ENCODE measurements at regions of chr7 and their contacts with region 1.

Region 1: DNA sequence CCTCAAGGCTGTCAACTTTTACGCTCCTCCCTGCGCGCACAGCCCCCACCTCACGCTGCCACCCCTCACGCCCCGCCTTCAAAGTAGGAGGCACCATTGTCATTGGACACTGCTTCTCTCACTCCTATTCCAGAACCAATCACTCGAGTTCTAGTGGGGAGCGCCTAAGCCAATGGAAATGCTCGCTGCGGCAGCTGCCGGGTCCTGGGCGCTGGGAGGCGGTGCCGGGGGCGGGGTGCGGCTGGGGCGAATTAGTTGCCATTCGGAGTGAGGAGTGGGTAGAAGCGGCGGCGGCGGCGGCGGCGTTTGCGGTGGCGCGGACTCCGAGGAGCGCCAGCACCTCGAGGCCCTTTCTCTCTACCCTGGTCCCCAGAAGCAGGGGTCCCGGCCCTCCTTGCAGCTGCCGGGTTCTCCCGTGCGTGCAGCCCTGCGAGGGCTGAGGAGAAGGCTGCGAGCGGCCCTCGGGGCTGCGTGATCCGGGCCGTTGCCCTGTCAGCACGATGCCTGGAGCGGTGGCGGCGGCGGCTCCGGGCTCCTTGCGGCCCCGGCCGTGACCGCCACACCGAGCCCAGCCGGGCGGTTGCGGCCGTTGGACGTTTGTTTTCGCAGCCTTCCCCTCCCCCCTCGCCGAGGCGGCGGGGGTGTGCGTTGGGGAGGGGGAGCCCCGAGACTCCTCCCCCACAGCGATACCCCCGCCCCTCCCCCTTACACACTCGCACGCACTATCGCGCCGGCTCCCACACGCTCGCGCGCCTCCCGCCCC is at the start of gene GLCCI1:
- DNase-seq: peak; percentile 98
- ATAC-seq: peak; percentile 95
- H3K4me3 Mint-ChIP-seq: peak within 1 kb of the TSS; percentile 89
- H3K27ac Mint-ChIP-seq: peak within 1 kb of the TSS; percentile 95
- H3K4me1 Mint-ChIP-seq: peaks cover 30% of the 10 kb centered on the region
- H3K27me3 Mint-ChIP-seq: no peaks in the 10 kb centered on the region
- total RNA-seq, gene GLCCI1: 12.3 to 15.1 TPM

Region 2: DNA sequence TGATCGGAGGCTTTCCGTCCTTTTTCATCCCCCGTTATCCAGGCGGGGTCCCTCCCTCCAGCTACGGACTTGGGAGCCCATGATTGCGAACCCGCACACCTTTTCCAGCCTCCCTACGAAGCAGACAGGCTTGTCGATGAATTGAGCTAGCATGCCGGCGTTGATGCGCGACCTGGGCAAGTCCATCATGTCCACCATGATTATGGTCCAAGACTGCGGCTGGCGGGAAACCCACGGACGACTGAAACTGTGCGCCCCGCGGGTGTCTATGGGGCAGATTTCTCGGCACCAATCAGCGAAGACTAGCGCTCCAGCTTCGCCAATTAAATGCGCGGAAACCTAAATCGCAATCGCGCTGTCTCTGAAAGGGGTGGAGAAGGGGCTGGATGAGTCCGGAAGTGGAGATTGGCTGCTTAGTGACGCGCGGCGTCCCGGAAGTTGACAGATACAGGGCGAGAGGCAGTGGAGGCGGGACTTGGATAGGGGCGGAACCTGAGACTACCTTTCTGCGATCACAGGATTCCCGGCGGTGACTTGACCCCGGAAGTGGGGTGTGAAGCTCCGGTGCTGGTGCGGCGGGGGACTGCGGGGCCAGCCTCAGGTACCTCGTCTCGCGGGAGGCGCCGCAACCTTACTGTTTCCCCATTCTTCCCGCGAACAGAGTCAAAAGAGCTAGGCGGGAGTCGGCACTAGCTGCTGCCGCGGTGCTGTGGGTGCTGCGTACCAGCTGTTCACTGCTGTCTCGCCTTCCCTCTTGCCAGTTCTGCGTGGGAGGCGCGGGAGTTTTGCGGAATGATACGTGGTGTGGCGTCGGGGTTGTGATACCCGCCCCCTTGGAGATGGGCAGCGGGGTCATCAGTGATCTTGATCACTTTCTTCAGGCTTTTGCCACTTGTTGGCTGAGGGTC is 328.2 kb before region 1 on chr7 and contains the start of gene UMAD1:
- CTCF ChIA-PET with region 1: interaction called, 3 read pairs
- POLR2A ChIA-PET with region 1: interaction called, 5 read pairs
- intact Hi-C with region 1: loop called (anchors 1 to 2 kb)
- DNase-seq: peak; percentile 99
- ATAC-seq: peak; percentile 92
- H3K4me3 Mint-ChIP-seq: peak within 1 kb of the TSS; percentile 93
- H3K27ac Mint-ChIP-seq: peak within 1 kb of the TSS; percentile 99
- H3K4me1 Mint-ChIP-seq: peaks cover 38% of the 10 kb centered on the region
- H3K27me3 Mint-ChIP-seq: no peaks in the 10 kb centered on the region
- total RNA-seq, gene UMAD1: 13.1 to 14.5 TPM

Region 3: DNA sequence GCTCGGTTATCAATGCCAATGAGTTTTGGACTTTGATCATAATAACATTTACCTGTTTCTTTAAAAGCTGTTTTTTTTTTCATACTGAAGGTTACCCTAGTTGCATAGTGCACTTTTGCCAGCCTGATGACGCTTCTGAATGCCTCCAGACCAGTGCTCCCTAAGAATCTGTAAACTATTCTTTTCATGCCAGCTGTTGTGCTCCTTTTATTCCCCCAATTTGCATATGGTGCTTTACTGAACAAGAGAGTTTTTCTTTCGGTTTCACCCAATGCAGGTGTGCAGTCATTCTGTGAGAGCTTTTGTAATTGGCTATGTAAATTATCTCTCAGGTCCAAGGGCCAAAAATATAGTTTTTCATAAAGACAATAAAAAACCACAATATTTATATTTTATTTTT is 48.2 kb before region 1 on chr7:
- CTCF ChIA-PET with region 1: interaction called, 4 read pairs
- POLR2A ChIA-PET with region 1: no interaction called
- intact Hi-C with region 1: loop called (anchors 2 kb)
- DNase-seq: peak; percentile 30
- ATAC-seq: peak; percentile 91
- H3K4me3 Mint-ChIP-seq: peak overlapping the region; percentile 22
- H3K27ac Mint-ChIP-seq: no peak overlapping the region
- H3K4me1 Mint-ChIP-seq: peaks cover 34% of the 10 kb centered on the region
- H3K27me3 Mint-ChIP-seq: no peaks in the 10 kb centered on the region

Region 4: DNA sequence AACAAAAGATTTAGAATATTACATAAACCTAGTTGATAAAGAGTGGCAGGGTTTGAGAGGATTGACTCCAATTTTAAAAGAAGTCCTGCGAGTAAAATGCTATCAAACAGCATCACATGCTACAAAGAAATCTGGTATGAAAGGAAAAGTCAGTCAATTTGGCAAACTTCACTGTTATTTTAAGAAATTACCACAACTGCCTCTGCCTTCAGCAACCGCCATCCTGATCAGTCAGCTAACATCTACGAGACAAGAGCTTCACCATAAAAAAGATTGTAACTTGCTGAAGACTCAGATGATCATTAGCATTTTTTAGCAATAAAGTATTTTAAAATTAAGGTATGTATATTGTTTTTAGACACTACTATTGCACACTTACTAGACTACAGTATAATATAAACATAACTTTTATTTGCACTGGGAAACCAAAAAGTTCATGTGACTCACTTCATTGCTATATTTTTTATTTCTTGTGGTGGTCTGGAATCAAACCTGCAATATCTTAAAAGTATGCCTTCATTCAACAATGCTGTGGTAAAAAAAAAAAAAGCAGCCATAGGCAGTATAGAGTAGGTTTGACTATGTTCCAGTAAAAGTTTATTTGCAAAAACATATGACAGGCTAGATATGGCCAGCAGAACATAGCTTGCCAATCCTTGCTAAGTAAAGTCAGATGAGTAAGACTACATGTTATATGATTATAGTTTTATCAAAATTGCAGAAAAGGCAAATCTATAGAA is 74.2 kb after region 1 on chr7:
- CTCF ChIA-PET with region 1: interaction called, 3 read pairs
- POLR2A ChIA-PET with region 1: no interaction called
- intact Hi-C with region 1: loop called (anchors 2 to 5 kb)
- DNase-seq: no peak
- ATAC-seq: no peak
- H3K4me3 Mint-ChIP-seq: no peak overlapping the region
- H3K27ac Mint-ChIP-seq: peak overlapping the region; percentile 60
- H3K4me1 Mint-ChIP-seq: peaks cover 67% of the 10 kb centered on the region
- H3K27me3 Mint-ChIP-seq: no peaks in the 10 kb centered on the region

Region 5: GRCh38 chr7:8109196-8110022 is 140.7 kb after region 1 on chr7:
- CTCF ChIA-PET with region 1: no interaction called
- POLR2A ChIA-PET with region 1: no interaction called
- intact Hi-C with region 1: no loop called
- DNase-seq: no peak
- ATAC-seq: no peak
- H3K4me3 Mint-ChIP-seq: no peak overlapping the region
- H3K27ac Mint-ChIP-seq: no peak overlapping the region
- H3K4me1 Mint-ChIP-seq: peaks cover 50% of the 10 kb centered on the region
- H3K27me3 Mint-ChIP-seq: no peaks in the 10 kb centered on the region

Region 6: GRCh38 chr7:8176370-8177081 is 207.8 kb after region 1 on chr7:
- CTCF ChIA-PET with region 1: no interaction called
- POLR2A ChIA-PET with region 1: interaction called, 3 read pairs
- intact Hi-C with region 1: loop called (anchors 1 kb)
- DNase-seq: peak; percentile 74
- ATAC-seq: peak; percentile 85
- H3K4me3 Mint-ChIP-seq: peak overlapping the region; percentile 63
- H3K27ac Mint-ChIP-seq: peak overlapping the region; percentile 95
- H3K4me1 Mint-ChIP-seq: peaks cover 42% of the 10 kb centered on the region
- H3K27me3 Mint-ChIP-seq: no peaks in the 10 kb centered on the region

Measured in activated CD4-positive, alpha-beta T cell treated with anti-CD3 and anti-CD28 coated beads for 36 hours (primary cell).